Activated naive CD8-positive, alpha-beta T cell treated with anti-CD3 and anti-CD28 coated beads, Interleukin-2, amount 10 ng/mL, durations not matched to agents 7 days and 5 days (primary cell): ENCODE measurements at regions of chr15 and their contacts with region 1.

Region 1: DNA sequence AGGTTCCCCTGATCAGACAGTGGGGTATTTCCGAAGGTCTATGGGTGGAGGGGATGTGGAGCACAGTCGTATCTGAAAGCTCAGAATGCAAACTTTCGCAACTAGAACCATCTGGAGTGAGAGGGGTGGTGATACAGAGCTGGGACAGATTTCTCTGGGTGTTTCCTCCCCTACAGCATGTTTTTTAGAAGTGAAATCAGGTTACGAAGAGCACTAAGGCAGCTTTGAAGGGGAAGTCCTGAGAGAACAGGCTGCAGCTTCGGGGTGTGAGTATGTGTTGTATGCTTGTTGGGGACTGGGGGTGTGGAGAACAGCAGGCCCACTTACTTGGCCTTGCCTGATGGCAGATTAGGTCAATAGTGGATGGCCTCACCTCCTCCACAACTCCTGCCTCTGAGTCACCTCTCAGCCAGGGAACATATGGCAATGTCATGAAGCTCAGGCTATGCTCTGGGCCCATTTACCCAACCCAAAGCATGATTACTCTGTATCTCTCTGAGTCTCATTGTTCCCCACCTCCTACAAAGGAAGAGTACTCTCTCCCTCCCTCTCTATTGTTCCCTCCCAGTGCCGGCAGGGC is 107.2 kb upstream of the RASGRP1 start:
- DNase-seq: peak; percentile 48
- ATAC-seq: peak; percentile 35
- H3K4me3 Mint-ChIP-seq: peak overlapping the region; percentile 77
- H3K27ac Mint-ChIP-seq: peak overlapping the region; percentile 94
- H3K4me1 Mint-ChIP-seq: peaks cover 73% of the 10 kb centered on the region
- H3K27me3 Mint-ChIP-seq: no peaks in the 10 kb centered on the region

Region 2: DNA sequence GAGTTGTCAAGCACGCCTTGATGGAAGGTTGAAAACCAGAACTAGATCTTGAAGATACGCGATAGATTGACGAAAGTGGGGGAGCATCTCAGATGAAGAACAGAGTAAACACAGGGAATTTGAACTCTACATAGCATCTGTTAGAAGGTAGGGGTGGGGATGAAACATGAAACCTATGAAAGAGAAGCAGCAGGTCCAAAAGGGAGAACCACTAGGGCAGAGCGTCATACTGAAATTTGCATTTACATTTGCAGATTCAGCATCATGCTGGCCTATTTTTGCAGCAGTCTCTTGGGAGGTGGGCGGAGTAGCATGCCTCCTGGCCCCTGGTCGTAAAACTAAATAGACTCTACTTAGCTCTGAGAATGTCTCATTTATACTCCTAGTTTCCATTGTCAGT is 61.0 kb before region 1 on chr15:
- POLR2A ChIA-PET with region 1: interaction called, 15 read pairs
- DNase-seq: no peak
- ATAC-seq: peak; percentile 71
- H3K4me3 Mint-ChIP-seq: peak overlapping the region; percentile 80
- H3K27ac Mint-ChIP-seq: peak overlapping the region; percentile 97
- H3K4me1 Mint-ChIP-seq: peaks cover 64% of the 10 kb centered on the region
- H3K27me3 Mint-ChIP-seq: no peaks in the 10 kb centered on the region

Region 3: DNA sequence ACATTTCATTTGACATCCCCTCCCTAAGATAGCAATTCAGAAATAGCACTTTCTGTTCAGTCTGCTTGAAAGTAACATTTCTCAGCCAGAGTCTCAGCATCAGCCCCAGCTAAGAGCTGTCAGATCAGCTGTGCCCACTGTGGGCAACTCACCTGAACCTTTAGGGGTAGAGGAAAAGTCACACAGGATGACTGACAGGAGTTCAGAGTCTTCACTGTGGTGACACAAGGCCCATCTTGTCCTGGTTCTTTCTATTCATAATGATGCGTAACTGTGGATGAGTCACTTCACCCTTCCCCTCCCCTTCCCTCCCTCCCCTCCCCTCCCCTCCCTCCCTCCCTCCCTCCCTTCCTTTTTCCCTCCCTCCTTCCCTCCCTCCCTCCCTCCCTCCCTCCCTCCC is 11.0 kb before region 1 on chr15:
- POLR2A ChIA-PET with region 1: interaction called, 25 read pairs
- DNase-seq: no peak
- ATAC-seq: peak; percentile 68
- H3K4me3 Mint-ChIP-seq: peak overlapping the region; percentile 29
- H3K27ac Mint-ChIP-seq: peak overlapping the region; percentile 66
- H3K4me1 Mint-ChIP-seq: peaks cover 56% of the 10 kb centered on the region
- H3K27me3 Mint-ChIP-seq: no peaks in the 10 kb centered on the region

Region 4: GRCh38 chr15:38683382-38684242 is 11.8 kb after region 1 on chr15:
- POLR2A ChIA-PET with region 1: interaction called, 88 read pairs
- DNase-seq: peak; percentile 66
- ATAC-seq: peak; percentile 44
- H3K4me3 Mint-ChIP-seq: peak overlapping the region; percentile 74
- H3K27ac Mint-ChIP-seq: peak overlapping the region; percentile 95
- H3K4me1 Mint-ChIP-seq: peaks cover 62% of the 10 kb centered on the region
- H3K27me3 Mint-ChIP-seq: no peaks in the 10 kb centered on the region

Region 5: DNA sequence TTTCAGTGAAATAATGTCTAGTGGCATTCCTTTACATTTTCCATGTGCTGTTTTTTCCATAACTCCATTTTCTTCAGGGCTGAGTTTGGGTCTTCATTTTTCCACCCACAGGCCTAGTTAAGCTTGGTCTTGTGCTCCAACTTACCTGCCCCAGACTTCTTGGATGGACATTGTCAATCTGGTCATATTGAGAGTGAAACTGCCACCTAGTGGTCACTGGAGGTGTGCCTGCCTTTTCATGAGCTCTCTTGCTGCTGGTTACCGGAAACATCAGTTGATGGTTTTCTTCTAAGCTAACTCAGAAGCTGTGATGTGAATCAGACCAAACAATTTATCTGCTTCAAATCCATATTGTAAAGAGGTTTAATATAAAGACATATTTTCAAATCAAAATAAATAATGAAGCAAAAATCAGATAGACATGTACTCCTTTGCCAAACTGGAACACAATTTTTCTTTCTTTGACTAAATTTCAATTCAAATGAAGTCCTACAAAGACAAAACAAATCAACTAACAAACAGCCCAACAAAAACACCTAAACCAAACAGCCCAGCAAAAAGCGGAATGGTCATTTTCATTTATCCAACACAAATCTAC is 28.0 kb after region 1 on chr15:
- POLR2A ChIA-PET with region 1: no interaction called
- DNase-seq: peak; percentile 58
- ATAC-seq: peak; percentile 45
- H3K4me3 Mint-ChIP-seq: peak overlapping the region; percentile 1
- H3K27ac Mint-ChIP-seq: peak overlapping the region; percentile 75
- H3K4me1 Mint-ChIP-seq: peaks cover 51% of the 10 kb centered on the region
- H3K27me3 Mint-ChIP-seq: peaks cover 6% of the 10 kb centered on the region